CD4-positive, alpha-beta T cell (primary cell): ENCODE measurements at regions of chr11 and their contacts with region 1.

Region 1: DNA sequence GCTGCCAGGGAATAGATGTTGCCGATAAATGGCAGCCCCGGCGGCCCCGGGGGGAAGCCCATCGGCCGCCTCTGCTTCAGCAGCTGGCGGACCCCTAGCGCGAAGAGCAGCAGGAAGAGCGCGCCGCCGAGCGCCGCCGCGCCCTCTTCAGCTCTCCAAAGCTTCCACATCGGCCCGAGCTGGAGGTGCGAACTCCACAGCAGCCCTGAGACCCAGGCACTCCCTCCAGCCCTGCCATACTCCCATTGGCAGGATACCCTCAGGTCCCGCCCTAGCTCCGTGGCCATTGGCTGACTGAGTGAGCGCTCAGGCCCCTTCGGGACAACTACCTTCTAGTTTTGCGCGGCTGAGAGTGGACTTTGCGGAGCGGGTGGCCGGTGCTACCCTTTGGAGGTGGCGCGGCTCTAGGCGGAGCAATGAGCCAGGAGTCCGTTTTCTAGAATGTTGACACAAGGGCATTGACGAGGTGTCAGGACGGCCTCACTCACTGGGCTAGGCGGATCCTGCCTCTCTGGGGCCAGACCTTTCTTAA is at the start of gene CYP2R1:
- DNase-seq: peak; percentile 79 to 95 (median 86)
- ATAC-seq: peak; percentile 82
- H3K4me3 ChIP-seq: peak within 1 kb of the TSS; percentile 94
- H3K4me3 Mint-ChIP-seq: peak within 1 kb of the TSS; percentile 96
- H3K27ac ChIP-seq: peak within 1 kb of the TSS; percentile 81 to 88
- H3K27ac Mint-ChIP-seq: peak within 1 kb of the TSS; percentile 94
- H3K4me1 ChIP-seq: peaks cover 31% of the 10 kb centered on the region
- H3K4me1 Mint-ChIP-seq: peaks cover 35% of the 10 kb centered on the region
- H3K27me3 ChIP-seq: no peaks in the 10 kb centered on the region
- H3K27me3 Mint-ChIP-seq: no peaks in the 10 kb centered on the region
- CTCF ChIP-seq: no peak
- total RNA-seq, gene CYP2R1: 14.2 to 15.8 TPM

Region 2: DNA sequence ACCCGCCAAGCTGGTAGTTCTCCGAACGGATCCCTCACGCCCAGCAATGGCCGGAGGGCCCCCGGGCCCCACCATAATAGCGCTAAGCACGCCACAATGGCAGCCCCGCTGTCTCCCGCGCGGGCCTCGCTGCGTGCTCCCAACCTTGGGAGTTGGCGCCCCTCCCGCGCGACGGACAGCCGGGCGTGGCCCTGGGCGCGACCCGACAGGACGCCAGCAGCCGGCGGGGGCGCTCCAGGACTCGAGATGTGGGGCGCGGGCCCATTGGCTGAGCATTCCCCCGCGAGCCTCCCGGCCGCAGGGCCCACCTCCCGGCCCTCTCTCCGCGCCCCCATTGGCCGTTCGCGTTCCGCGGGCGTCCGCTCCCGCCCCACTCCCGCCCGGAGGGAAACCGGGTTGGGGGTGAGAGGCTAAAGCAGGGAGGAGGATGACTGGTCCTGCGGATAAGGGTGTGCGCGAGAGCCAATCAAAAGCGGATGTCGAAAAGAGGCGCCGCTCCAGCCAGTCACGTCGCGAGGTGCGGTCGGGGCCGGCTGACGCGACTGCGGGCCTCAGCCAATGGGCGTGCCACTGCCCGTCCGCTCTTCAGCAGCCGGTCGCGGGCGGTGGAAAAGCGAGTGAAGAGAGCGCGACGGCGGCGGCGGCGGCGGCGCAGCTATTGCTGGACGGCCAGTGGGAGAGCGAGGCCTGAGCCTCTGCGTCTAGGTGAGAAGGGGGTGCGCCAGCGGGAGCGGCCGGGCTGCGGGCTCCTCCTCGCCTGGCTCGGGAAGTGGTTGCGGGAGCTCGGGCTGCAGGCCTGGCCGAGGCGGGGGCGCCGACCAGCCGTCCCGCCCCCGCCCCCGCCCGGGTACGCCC is 1223.8 kb before region 1 on chr11 and contains the start of gene FAR1:
- CTCF ChIA-PET with region 1: no interaction called
- POLR2A ChIA-PET with region 1: no interaction called
- intact Hi-C with region 1: loop called in 1 of 2 experiments (anchors 10 kb)
- DNase-seq: peak; percentile 90 to 98 (median 94)
- ATAC-seq: peak; percentile 88
- H3K4me3 ChIP-seq: peak within 1 kb of the TSS; percentile 85
- H3K4me3 Mint-ChIP-seq: peak within 1 kb of the TSS; percentile 98
- H3K27ac ChIP-seq: peak within 1 kb of the TSS; percentile 33 to 47
- H3K27ac Mint-ChIP-seq: peak within 1 kb of the TSS; percentile 88
- H3K4me1 ChIP-seq: peaks cover 28% of the 10 kb centered on the region
- H3K4me1 Mint-ChIP-seq: peaks cover 51% of the 10 kb centered on the region
- H3K27me3 ChIP-seq: no peaks in the 10 kb centered on the region
- H3K27me3 Mint-ChIP-seq: peaks cover 8% of the 10 kb centered on the region
- CTCF ChIP-seq: peak; percentile 70
- total RNA-seq, gene FAR1: 28.4 to 29.0 TPM

Region 3: GRCh38 chr11:14358729-14359439 is 533.2 kb before region 1 on chr11 and contains the start of gene RRAS2:
- CTCF ChIA-PET with region 1: no interaction called
- POLR2A ChIA-PET with region 1: no interaction called
- intact Hi-C with region 1: loop called in 1 of 2 experiments (anchors 10 kb)
- DNase-seq: peak; percentile 65 to 90 (median 74)
- ATAC-seq: peak; percentile 95
- H3K4me3 ChIP-seq: peak within 1 kb of the TSS; percentile 69
- H3K4me3 Mint-ChIP-seq: peak within 1 kb of the TSS; percentile 92
- H3K27ac ChIP-seq: no peak within 1 kb of the TSS
- H3K27ac Mint-ChIP-seq: peak within 1 kb of the TSS; percentile 75
- H3K4me1 ChIP-seq: peaks cover 13% of the 10 kb centered on the region
- H3K4me1 Mint-ChIP-seq: peaks cover 30% of the 10 kb centered on the region
- H3K27me3 ChIP-seq: no peaks in the 10 kb centered on the region
- H3K27me3 Mint-ChIP-seq: no peaks in the 10 kb centered on the region
- CTCF ChIP-seq: no peak
- total RNA-seq, gene RRAS2: 20.7 to 21.2 TPM

Region 4: GRCh38 chr11:14499554-14500180 is 392.4 kb before region 1 on chr11 and contains the start of gene COPB1:
- CTCF ChIA-PET with region 1: interaction called, 6 read pairs
- POLR2A ChIA-PET with region 1: interaction called, 35 read pairs
- intact Hi-C with region 1: loop called (anchors 2 to 5 kb)
- DNase-seq: peak; percentile 84 to 96 (median 90)
- ATAC-seq: peak; percentile 94
- H3K4me3 ChIP-seq: peak within 1 kb of the TSS; percentile 85
- H3K4me3 Mint-ChIP-seq: peak within 1 kb of the TSS; percentile 97
- H3K27ac ChIP-seq: peak within 1 kb of the TSS; percentile 67 to 84
- H3K27ac Mint-ChIP-seq: peak within 1 kb of the TSS; percentile 92
- H3K4me1 ChIP-seq: peaks cover 6% of the 10 kb centered on the region
- H3K4me1 Mint-ChIP-seq: peaks cover 53% of the 10 kb centered on the region
- H3K27me3 ChIP-seq: no peaks in the 10 kb centered on the region
- H3K27me3 Mint-ChIP-seq: no peaks in the 10 kb centered on the region
- CTCF ChIP-seq: no peak
- total RNA-seq, gene COPB1: 93.1 to 95.9 TPM

Region 5: DNA sequence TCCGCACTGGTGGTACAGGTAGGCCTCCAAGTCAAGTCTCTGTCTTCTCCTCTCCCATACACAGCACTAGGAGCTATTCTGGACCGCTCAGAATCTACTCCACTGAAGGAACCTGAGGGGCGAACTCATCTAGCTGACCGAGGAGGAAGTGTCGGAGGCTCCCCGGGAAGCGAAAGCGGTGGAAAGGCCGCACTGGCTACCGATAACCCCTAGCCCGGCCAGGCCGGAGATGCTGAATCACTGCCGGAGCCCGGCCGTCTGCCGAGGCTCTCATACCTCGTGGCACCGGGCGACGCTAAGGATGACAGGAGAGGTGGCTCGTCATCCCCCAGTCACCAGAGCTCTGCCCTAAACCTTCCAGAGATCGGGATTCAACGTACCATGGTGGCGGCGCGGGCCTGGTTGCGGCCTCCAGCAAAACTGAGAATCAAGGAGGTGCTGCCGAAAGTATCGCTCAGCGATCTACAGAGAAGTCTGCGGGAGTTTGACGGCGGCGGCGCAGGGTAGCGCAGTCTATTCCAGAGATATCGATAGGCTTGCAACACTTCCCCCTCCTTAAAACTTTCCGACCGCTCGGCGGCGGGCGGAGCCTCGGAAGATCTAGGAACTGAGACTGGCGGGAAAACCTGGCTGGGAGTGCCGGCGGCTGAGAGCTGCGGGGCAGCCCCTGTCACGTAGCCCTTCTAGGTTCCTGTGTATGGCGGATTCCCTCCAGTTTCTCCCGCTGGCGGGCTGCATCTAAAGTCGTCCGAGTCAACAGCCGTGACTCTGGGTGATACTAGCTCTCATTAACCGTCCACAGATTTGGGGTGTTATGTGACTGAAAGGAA is 372.0 kb before region 1 on chr11 and contains the start of gene PSMA1:
- CTCF ChIA-PET with region 1: no interaction called
- POLR2A ChIA-PET with region 1: interaction called, 39 read pairs
- intact Hi-C with region 1: loop called (anchors 1 to 2 kb)
- DNase-seq: peak; percentile 79 to 95 (median 87)
- ATAC-seq: peak; percentile 90
- H3K4me3 ChIP-seq: peak within 1 kb of the TSS; percentile 74
- H3K4me3 Mint-ChIP-seq: peak within 1 kb of the TSS; percentile 96
- H3K27ac ChIP-seq: peak within 1 kb of the TSS; percentile 81 to 83
- H3K27ac Mint-ChIP-seq: peak within 1 kb of the TSS; percentile 94
- H3K4me1 ChIP-seq: peaks cover 14% of the 10 kb centered on the region
- H3K4me1 Mint-ChIP-seq: peaks cover 37% of the 10 kb centered on the region
- H3K27me3 ChIP-seq: no peaks in the 10 kb centered on the region
- H3K27me3 Mint-ChIP-seq: no peaks in the 10 kb centered on the region
- CTCF ChIP-seq: peak; percentile 36
- total RNA-seq, gene PSMA1: 170 to 175 TPM

Region 6: DNA sequence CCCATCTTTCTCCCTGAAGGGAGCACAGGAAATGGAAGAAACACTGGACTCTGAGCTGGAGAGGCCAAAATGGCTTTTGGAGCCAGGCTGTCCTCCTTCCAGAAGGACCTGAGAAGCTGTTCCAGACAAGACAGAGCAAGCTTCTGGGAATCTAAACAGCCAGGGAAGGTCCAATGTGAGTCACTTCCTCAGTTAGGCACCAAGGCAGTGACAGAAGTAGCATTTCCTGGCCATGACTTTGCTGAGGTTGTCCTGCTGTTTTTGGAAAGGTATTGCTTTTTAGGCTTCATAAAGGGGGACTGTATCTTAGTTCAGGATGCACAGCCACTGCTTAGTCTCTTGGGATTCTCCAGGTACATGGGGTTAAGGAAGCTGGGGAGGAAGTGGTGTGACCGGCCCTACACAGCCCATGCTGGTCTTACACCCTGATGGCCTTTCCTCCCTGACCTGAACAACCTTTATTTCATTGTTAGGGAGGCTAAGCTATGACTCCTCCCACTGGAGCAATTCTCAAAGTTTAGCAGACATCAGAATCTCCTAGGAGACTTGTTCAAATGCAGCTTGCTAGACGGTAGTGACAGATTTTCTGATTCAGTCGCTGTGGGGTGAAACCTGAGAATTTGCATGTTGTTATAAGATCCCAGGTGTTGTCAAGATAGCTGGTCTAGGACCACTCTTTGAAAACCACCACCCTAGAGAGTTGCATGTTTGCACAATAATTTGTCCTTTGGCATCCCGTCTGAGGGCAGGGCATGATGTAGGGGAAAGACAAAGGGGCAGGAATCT is 215.8 kb after region 1 on chr11:
- CTCF ChIA-PET with region 1: no interaction called
- POLR2A ChIA-PET with region 1: no interaction called
- intact Hi-C with region 1: no loop called
- DNase-seq: no peak
- ATAC-seq: no peak
- H3K4me3 ChIP-seq: no peak overlapping the region
- H3K4me3 Mint-ChIP-seq: no peak overlapping the region
- H3K27ac ChIP-seq: no peak overlapping the region
- H3K27ac Mint-ChIP-seq: no peak overlapping the region
- H3K4me1 ChIP-seq: no peaks in the 10 kb centered on the region
- H3K4me1 Mint-ChIP-seq: no peaks in the 10 kb centered on the region
- H3K27me3 ChIP-seq: no peaks in the 10 kb centered on the region
- H3K27me3 Mint-ChIP-seq: peaks cover under 1% of the 10 kb centered on the region
- CTCF ChIP-seq: no peak